Pancreas (tissue), 10 donors: ENCODE measurements at regions of chr6 and their contacts with region 1.

Region 1: DNA sequence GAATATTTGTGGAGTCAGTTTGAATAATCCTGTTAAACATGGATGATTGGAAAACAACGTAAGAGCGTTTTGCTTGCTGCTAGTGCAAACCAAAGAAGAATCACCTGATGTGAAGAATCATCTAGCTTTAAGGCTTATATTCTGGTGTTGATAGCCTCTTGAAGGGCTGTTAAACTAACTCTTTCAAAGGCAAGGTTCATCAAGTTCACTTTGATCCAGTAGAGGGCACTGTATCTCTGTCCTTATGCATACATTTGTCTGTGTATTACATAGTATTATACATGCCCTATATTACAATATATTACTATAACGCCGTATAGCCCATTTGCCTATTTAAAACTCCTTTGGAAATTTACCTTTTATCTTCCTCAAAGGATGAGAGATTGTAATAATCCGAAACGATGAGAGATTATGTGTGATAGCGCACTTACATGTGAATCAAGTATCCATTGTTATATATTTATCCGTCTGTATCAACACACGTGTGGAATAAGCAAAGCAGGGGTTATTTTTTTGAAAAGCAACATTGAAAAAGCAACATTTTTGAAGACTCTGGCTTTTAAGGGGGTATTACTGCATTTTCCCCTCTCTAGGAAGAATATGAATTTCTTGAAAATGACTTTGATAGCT is 50.8 kb upstream of the NRN1 start:
- DNase-seq: no peak
- ATAC-seq: peak in 3 of 4 donors; percentile 71 to 77 (median 76)
- H3K4me3 ChIP-seq: no peak overlapping the region
- H3K27ac ChIP-seq: no peak overlapping the region
- H3K4me1 ChIP-seq: no peaks in the 10 kb centered on the region
- H3K27me3 ChIP-seq: peaks cover 0 to 9% (median 2%) of the 10 kb centered on the region in 4 donors
- CTCF ChIP-seq: peak in 2 of 4 donors; percentile 34 to 53

Region 2: DNA sequence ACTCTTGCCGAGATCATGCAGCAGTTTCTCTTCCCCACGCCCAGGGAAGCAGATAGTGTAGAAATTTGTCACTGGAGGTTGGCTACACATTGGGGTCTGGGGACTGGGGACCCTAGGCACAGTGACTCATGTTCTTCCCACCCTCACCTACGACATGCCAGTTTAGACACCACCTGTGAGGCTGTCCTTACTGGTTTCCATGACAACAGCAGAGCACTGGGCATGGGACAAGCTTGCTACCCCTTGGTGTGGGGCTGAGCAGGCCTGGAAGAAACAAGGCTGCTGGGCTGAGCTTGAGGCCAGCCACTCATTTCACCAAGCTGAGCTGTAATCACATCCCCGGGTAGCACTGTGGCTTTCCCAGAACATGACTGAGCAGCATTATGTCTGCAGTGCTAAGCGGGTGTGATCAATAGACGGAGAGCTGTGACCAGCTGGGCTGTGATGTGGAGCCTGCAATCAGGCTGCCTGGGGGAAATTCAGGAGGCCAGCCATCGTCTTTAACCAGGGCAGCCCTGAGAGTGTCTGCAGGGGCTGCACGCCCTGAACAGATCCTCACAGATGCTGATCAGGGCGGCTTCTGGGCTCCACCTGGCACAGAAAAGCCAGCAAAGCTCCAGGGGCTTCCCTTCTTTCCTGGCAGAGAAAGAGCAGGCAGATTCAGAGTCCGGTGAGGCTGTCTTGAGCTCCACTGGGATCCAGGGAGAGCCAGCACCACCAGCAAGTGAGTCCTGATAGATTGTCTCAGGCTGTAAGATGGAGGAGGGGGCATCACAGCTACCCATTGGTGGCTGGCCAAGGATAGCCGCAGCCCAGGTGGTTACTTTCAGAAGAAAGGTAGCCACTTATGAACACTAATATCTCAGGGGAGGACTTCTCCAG is 216.8 kb before region 1 on chr6:
- intact Hi-C with region 1: no loop called
- DNase-seq: no peak
- ATAC-seq: no peak
- H3K4me3 ChIP-seq: no peak overlapping the region
- H3K27ac ChIP-seq: no peak overlapping the region
- H3K4me1 ChIP-seq: no peaks in the 10 kb centered on the region
- H3K27me3 ChIP-seq: no peaks in the 10 kb centered on the region
- CTCF ChIP-seq: no peak

Region 3: DNA sequence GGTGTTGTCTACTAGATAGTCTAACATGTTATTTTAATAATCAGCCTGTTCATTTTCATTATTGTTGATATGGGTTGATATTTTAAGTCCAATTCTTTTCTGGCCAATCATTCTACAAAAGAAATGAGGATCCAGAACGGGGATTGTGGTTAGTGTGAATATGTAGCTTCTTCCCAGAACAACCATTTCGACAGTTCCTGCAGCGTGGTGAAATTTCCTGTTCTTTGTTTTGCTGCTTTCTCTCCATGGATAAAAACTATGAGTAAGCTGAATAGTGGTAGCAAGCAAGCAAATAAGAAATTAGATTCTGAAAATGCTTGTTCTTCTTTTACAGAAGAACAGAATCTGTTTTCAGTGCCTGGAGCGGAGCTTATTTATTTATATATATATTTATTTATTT is 328.5 kb after region 1 on chr6:
- intact Hi-C with region 1: no loop called
- DNase-seq: no peak
- ATAC-seq: peak in 2 of 4 donors; percentile 51 to 64
- H3K4me3 ChIP-seq: no peak overlapping the region
- H3K27ac ChIP-seq: no peak overlapping the region
- H3K4me1 ChIP-seq: no peaks in the 10 kb centered on the region
- H3K27me3 ChIP-seq: no peaks in the 10 kb centered on the region
- CTCF ChIP-seq: no peak

Region 4: GRCh38 chr6:6547110-6547879 is 489.8 kb after region 1 on chr6:
- intact Hi-C with region 1: loop called in 2 of 3 experiments (anchors 10 kb)
- DNase-seq: peak; percentile 79 to 93 (median 90)
- ATAC-seq: peak; percentile 97 to 98 (median 98)
- H3K4me3 ChIP-seq: peak overlapping the region in 3 of 4 donors; percentile 23 to 46 (median 30)
- H3K27ac ChIP-seq: no peak overlapping the region
- H3K4me1 ChIP-seq: no peaks in the 10 kb centered on the region
- H3K27me3 ChIP-seq: peaks cover 0 to 8% (median 2%) of the 10 kb centered on the region in 4 donors
- CTCF ChIP-seq: peak; percentile 91 to 98 (median 96)